SK-MEL-5 (cell line): ENCODE measurements at regions of chr20 and their contacts with region 1.

Region 1: GRCh38 chr20:37270576-37271420 is 9.2 kb upstream of the GHRH start:
- DNase-seq: no peak

Region 2: GRCh38 chr20:37192137-37192854 is 78.5 kb before region 1 on chr20:
- in situ Hi-C with region 1: no loop called
- DNase-seq: peak; percentile 98

Region 3: DNA sequence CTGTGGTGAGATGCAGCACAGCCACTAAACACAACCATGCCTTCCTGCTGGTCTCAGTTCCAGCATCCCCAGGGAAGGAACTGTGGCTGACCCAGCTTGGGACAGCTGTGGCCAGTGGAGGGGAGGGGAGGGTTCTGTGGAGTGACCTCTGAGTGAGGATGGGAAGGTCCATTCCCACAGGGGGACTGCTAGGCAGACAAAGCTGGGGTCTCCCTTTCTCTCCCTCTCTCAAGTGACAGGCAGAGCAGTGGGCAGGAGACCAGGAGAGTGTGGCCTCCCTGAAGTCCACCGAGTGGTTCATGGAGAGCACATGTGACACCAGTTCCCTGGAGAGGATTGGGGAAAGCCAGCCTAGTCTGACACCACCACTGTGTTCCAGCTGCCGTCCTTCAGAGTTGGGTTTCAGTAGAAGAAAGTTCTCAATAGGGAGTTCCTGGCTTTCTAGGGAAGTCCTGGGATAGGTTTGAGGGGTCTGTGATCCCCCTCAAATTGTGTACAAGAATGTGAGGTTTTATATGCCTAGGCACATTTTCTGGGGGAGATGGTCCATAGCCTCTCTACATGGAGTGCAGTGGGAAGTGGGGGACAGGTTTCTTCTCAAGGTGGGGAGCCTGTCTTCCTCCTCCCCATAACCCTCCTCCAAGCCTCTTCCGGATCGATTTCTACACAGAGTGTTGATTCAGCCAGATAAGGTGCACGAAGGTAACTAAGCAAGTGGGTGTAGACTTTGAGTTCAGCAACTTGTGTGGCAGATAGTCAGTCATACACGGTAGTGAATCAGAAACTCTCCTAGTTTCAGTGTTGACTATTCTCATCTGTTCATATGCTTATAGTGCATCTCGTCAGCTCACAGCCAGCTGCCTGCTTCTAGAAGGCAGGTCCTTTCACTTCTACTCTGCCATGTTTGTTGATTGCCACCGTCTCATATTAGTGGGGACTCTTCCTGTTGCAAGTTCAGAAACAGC is 37.6 kb after region 1 on chr20:
- in situ Hi-C with region 1: no loop called
- DNase-seq: no peak

Region 4: GRCh38 chr20:37519508-37520128 is 248.8 kb after region 1 on chr20:
- in situ Hi-C with region 1: loop called (anchors 25 kb)
- DNase-seq: peak; percentile 29